ENCODE measurements at regions of chr18 and their contacts with region 1.

Region 1: DNA sequence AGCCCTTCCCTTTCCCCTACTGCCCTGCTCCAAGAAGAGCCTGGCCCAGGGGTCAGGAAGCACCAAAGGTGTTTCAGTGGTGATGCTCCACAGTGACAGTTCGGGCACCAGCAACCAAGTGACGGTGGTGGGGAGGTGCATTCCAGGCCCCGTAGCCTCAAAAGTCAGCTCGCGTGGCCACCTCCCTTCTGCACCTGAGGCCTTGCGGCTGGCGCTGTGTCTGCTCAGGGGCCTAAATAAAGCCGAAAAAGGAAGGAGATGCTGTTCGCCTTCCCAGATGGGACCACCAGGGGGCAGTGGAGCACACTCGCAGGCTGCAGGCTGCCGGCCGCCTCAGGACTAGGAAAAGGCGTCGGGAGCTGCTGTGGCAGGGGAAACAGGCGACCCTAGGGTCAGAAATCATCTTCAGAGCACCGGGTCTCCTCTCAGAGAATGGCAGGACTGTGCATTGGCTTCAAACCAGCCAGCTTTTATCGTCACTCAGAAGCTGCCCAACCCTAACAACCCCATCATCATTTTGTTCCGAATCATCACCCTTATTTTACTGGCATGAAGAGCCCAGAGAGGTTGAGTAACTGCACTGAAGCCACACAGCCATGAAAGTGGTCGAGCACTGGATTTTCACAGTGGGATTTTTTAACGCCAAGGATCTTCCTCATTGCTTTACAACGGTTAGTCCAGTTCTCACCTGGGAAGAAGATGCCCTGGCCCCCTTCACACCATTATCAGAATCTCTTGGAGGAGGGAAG is 213.0 kb upstream of the CELF4 start:
- DNase-seq: peak; percentile 74 to 87 (median 83)
- H3K4me3 ChIP-seq: peak overlapping the region in 2 of 59 donors; percentile 16 to 24
- H3K27ac ChIP-seq: peak overlapping the region in 2 of 59 donors; percentile 11 to 15
- H3K27me3 ChIP-seq: no peaks in the 10 kb centered on the region
- CTCF ChIP-seq: peak; percentile 78 to 95 (median 88)

Region 2: GRCh38 chr18:37564711-37565100 is 213.9 kb before region 1 on chr18:
- intact Hi-C with region 1: loop called in 1 of 2 experiments (anchors 10 kb)
- DNase-seq: peak in 5 of 10 donors; percentile 39 to 66 (median 49)
- H3K4me3 ChIP-seq: peak overlapping the region; percentile 50 to 89 (median 69)
- H3K27ac ChIP-seq: peak overlapping the region in 56 of 59 donors; percentile 5 to 91 (median 78)
- H3K27me3 ChIP-seq: peaks cover 0 to 19% (median 0%) of the 10 kb centered on the region in 45 donors
- CTCF ChIP-seq: peak in 3 of 56 donors; percentile 11 to 23 (median 11)

Region 3: GRCh38 chr18:37937287-37937686 is 158.7 kb after region 1 on chr18:
- intact Hi-C with region 1: loop called in 1 of 2 experiments (anchors 10 kb)
- DNase-seq: no peak
- H3K4me3 ChIP-seq: no peak overlapping the region
- H3K27ac ChIP-seq: peak overlapping the region in 1 of 59 donors; percentile 87
- H3K27me3 ChIP-seq: no peaks in the 10 kb centered on the region
- CTCF ChIP-seq: peak in 1 of 56 donors; percentile 18

Region 4: DNA sequence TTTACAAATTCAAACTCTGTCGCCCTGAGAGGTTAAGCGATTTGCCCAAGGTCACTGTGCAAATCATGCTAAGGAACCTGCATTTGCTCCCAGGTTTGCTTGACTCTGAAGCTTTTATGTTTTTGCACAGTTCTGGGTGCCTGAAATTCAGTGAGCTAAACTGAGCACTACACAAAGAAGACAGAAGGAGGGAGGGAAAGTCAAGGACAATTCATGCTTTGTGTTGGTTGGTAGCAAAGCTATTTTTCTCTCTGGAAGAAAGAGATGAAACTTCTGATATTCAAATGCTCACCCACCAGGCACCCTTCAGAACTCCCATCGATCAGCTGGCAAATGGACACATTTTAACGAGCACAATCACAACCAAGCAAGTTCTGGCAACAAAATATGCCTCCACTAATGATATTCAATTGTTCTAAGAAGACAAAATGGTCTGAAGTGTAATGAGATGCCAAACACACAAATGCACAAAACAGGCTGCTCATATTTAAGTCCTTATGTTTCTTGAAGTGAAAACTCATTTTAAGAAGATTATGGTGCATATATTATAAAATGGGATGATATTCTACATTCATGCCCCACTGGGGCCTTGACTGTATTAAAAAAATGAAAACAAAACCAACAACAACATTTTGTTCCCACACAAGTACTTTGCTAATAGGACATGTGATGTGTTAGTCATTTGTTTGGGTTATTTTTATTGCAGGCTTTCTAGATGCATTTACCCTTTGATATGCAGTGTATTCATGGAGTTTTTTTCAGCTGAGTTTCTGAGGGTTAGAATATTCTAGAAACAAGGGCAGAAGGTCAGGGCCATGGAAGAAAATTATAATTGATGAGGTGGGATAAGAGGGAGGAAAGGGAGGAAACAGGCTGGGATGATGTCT is 232.6 kb after region 1 on chr18:
- intact Hi-C with region 1: loop called in 1 of 2 experiments (anchors 5 kb)
- DNase-seq: no peak
- H3K4me3 ChIP-seq: peak overlapping the region in 1 of 59 donors; percentile 13
- H3K27ac ChIP-seq: peak overlapping the region in 58 of 59 donors; percentile 8 to 99 (median 82)
- H3K27me3 ChIP-seq: no peaks in the 10 kb centered on the region
- CTCF ChIP-seq: no peak

Measured in dorsolateral prefrontal cortex (tissue), 120 donors.